ENCODE measurements at regions of chr6 and their contacts with region 1.

Region 1: GRCh38 chr6:108526739-108527174 is 34.0 kb upstream of the FOXO3 start:
- DNase-seq: peak; percentile 52
- H3K4me3 ChIP-seq: no peak overlapping the region
- H3K27ac ChIP-seq: no peak overlapping the region
- H3K4me1 ChIP-seq: no peaks in the 10 kb centered on the region
- H3K27me3 ChIP-seq: peaks cover 0 to 2% of the 10 kb centered on the region in 2 experiments
- CTCF ChIP-seq: peak; percentile 59 to 65
- POLR2A ChIP-seq: no peak

Region 2: GRCh38 chr6:107977283-107977682 is 549.5 kb before region 1 on chr6:
- CTCF ChIA-PET with region 1: interaction called, 14 read pairs
- POLR2A ChIA-PET with region 1: no interaction called
- dilution Hi-C with region 1: no loop called
- intact Hi-C with region 1: loop called (anchors 1 kb)
- DNase-seq: peak; percentile 61
- H3K4me3 ChIP-seq: no peak overlapping the region
- H3K27ac ChIP-seq: no peak overlapping the region
- H3K4me1 ChIP-seq: no peaks in the 10 kb centered on the region
- H3K27me3 ChIP-seq: peaks cover 8 to 12% of the 10 kb centered on the region in 2 experiments
- CTCF ChIP-seq: peak; percentile 5 to 8
- POLR2A ChIP-seq: no peak

Region 3: GRCh38 chr6:107982486-107982885 is 544.3 kb before region 1 on chr6:
- CTCF ChIA-PET with region 1: interaction called, 14 read pairs
- POLR2A ChIA-PET with region 1: no interaction called
- dilution Hi-C with region 1: no loop called
- intact Hi-C with region 1: loop called (anchors 1 kb)
- DNase-seq: no peak
- H3K4me3 ChIP-seq: no peak overlapping the region
- H3K27ac ChIP-seq: no peak overlapping the region
- H3K4me1 ChIP-seq: no peaks in the 10 kb centered on the region
- H3K27me3 ChIP-seq: peaks cover 0 to 6% of the 10 kb centered on the region in 2 experiments
- CTCF ChIP-seq: no peak
- POLR2A ChIP-seq: no peak

Region 4: DNA sequence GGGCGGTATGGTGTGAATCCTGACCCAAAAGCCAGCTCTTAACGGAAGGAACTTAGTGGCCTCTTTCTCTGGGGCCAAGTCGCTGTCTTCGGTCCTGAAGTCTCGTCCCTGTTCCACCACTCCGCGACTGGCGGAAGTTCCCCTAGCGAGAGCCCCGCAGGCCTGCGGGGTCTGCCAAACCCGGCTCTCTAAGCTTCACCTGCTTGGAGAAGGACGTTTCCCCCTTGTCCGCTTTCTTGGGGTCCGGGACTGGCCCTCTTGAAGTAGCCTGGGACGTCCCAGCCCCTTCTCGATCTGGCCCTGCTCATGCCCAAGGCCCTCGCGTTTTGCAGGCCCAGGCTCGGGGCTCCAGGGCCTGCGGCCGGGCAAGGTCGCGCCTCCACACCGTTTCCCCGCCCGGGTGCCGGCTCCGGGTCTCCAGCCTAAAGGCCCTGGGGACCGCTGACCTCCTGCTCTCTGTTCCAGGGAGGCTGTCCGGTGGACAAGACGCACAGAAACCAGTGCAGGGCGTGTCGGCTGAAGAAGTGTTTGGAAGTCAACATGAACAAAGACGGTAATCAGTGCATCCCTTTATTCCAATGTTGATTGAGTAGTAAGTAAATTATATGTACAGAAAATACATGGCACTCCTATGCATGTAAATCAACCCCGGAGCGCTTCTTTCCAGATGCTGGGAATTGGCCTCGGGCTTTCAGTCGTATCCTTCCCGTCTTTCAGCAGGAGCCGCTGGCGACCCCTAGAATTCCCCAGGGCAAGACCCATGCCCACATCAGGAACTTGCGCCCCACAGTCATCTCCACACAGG is 352.2 kb before region 1 on chr6:
- CTCF ChIA-PET with region 1: interaction called, 4 read pairs
- POLR2A ChIA-PET with region 1: no interaction called
- dilution Hi-C with region 1: no loop called
- intact Hi-C with region 1: loop called (anchors 10 kb)
- DNase-seq: no peak
- H3K4me3 ChIP-seq: no peak overlapping the region
- H3K27ac ChIP-seq: no peak overlapping the region
- H3K4me1 ChIP-seq: peaks cover 5% of the 10 kb centered on the region
- H3K27me3 ChIP-seq: peaks cover 78 to 100% of the 10 kb centered on the region in 2 experiments
- CTCF ChIP-seq: no peak
- POLR2A ChIP-seq: no peak

Measured in endothelial cell of umbilical vein (primary cell).